Mammary epithelial cell (primary cell): ENCODE measurements at regions of chr20 and their contacts with region 1.

Region 1: DNA sequence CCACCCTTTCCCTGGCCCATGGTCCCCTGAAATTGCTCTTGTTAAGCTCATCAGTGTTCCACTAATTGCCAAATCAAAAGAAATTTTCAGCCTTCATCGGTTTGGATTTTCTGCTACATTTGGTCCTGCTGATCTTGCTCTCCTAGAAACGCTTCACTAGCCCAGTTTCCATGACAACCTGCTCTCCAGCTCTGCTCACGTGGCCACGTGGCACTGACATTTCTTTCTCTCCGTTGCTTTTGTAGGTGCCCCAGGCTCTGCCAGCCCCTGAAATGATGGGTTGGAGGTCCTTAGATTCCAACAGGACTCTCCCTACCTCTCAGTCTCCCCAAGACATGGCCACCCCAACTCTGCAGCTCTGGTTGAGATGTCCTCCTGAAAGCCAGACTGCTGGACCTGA is 45.8 kb upstream of the NNAT start:
- DNase-seq: no peak
- H3K4me3 ChIP-seq: no peak overlapping the region
- H3K27ac ChIP-seq: no peak overlapping the region
- H3K4me1 ChIP-seq: no peaks in the 10 kb centered on the region
- H3K27me3 ChIP-seq: no peaks in the 10 kb centered on the region
- CTCF ChIP-seq: no peak

Region 2: GRCh38 chr20:37270576-37271420 is 204.5 kb before region 1 on chr20:
- CTCF ChIA-PET with region 1: no interaction called
- dilution Hi-C with region 1: loop called (anchors 25 kb)
- in situ Hi-C with region 1: no loop called
- intact Hi-C with region 1: no loop called
- DNase-seq: no peak
- H3K4me3 ChIP-seq: no peak overlapping the region
- H3K27ac ChIP-seq: no peak overlapping the region
- H3K4me1 ChIP-seq: peaks cover 4% of the 10 kb centered on the region
- H3K27me3 ChIP-seq: no peaks in the 10 kb centered on the region
- CTCF ChIP-seq: no peak

Region 3: DNA sequence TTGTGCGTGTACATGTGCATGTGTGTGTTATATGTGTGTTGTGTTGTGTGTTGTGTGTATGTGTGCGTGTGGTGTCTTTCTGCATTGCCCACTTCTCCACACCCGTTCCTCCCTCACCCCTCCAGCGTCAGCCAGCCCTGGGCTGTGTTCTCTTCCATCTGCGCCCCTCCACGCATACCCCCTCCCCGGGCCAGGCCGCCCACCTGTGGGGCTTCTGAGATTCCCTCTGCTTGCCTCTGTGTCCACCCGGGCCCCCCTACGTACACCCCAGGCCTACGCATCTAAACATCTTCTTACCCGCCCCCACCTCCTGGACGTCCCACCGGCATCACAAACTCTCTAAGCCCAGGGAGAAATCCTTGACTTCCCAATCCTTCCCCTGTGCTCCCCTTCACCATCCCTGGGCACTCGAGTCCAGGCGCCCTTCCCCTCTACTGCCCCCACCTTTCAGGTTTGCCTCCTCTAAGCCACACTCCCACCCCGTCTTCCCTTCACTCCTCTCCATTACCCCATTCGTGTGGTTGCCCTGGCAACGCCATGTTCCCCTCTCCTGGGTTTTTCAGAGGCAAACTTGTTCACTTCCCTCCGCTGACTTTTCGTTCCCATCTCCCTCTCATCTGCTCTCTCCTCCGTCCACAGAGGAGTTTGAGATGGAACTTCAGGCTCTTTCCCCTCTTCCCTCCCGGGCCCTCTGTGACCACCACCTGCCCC is 35.9 kb before region 1 on chr20:
- CTCF ChIA-PET with region 1: no interaction called
- dilution Hi-C with region 1: loop called (anchors 5 kb)
- in situ Hi-C with region 1: no loop called
- intact Hi-C with region 1: no loop called
- DNase-seq: no peak
- H3K4me3 ChIP-seq: no peak overlapping the region
- H3K27ac ChIP-seq: no peak overlapping the region
- H3K4me1 ChIP-seq: no peaks in the 10 kb centered on the region
- H3K27me3 ChIP-seq: no peaks in the 10 kb centered on the region
- CTCF ChIP-seq: no peak

Region 4: GRCh38 chr20:37559312-37560027 is 84.2 kb after region 1 on chr20:
- CTCF ChIA-PET with region 1: no interaction called
- dilution Hi-C with region 1: loop called (anchors 5 kb)
- in situ Hi-C with region 1: no loop called
- intact Hi-C with region 1: no loop called
- DNase-seq: no peak
- H3K4me3 ChIP-seq: no peak overlapping the region
- H3K27ac ChIP-seq: no peak overlapping the region
- H3K4me1 ChIP-seq: no peaks in the 10 kb centered on the region
- H3K27me3 ChIP-seq: no peaks in the 10 kb centered on the region
- CTCF ChIP-seq: no peak